ENCODE measurements at regions of chr9 and their contacts with region 1.

Region 1: DNA sequence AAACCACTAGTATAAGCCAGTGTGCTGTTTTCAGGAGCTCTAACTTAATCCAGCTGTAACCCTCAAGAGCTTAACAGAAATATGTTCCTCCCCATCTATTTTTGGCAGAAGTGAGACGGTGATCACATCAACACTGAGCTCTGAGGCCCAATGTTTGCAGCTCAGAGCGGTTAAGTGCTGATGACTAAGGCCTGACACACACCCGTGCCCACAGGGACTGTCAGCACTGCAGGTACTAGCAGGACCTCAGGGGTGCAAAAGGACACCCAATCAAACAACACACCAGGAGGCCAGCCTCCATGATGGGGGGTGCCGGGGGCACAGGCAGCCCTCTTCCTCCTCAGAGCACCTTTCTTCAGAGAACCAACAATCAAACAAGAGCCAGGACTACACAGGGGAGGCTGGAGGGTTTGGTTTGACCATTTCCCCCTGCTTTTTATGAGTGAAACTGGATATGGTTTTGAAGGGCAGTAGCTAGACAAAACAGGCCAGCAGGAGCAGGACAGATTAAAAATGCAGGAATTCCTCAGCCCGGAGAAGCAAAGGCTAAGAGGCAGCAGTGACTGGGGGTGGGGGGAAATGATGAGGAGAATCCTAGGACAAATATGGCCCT is 61.3 kb downstream of the RAPGEF1 start:
- DNase-seq: peak; percentile 85 to 93
- H3K4me3 ChIP-seq: no peak overlapping the region
- H3K27ac ChIP-seq: peak overlapping the region; percentile 93 to 96
- H3K4me1 ChIP-seq: peaks cover 34 to 80% of the 10 kb centered on the region in 2 donors
- H3K27me3 ChIP-seq: no peaks in the 10 kb centered on the region
- CTCF ChIP-seq: no peak

Region 2: GRCh38 chr9:131608493-131609037 is 70.0 kb before region 1 on chr9:
- intact Hi-C with region 1: loop called (anchors 1 kb)
- DNase-seq: peak; percentile 36 to 92
- H3K4me3 ChIP-seq: peak overlapping the region in 1 of 2 donors; percentile 49
- H3K27ac ChIP-seq: peak overlapping the region; percentile 76 to 91
- H3K4me1 ChIP-seq: peaks cover 12 to 43% of the 10 kb centered on the region in 2 donors
- H3K27me3 ChIP-seq: no peaks in the 10 kb centered on the region
- CTCF ChIP-seq: no peak

Measured in ascending aorta (tissue), 2 donors.